Posterior vena cava (tissue), 2 donors: ENCODE measurements at regions of chr10 and their contacts with region 1.

Region 1: DNA sequence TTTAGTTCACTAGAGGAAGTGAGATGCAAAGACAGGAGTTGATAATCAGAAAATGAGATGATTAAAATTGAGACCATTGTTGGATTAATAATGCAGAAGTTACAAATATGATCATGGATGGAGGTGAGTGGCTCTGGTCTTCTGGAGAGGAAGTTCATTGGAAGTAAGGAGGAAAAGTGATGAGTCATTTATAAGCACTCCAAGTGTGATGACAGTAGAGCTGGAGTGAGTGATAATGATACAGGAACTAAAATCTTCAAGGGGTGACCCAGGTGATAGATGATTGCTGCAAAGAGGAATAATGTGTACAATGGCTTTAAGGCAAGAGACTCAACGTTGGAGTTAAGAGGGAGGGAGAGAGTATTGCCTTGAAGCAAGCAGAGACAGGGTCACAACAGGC is 20.7 kb downstream of the ZNF32 start:
- DNase-seq: no peak

Region 2: DNA sequence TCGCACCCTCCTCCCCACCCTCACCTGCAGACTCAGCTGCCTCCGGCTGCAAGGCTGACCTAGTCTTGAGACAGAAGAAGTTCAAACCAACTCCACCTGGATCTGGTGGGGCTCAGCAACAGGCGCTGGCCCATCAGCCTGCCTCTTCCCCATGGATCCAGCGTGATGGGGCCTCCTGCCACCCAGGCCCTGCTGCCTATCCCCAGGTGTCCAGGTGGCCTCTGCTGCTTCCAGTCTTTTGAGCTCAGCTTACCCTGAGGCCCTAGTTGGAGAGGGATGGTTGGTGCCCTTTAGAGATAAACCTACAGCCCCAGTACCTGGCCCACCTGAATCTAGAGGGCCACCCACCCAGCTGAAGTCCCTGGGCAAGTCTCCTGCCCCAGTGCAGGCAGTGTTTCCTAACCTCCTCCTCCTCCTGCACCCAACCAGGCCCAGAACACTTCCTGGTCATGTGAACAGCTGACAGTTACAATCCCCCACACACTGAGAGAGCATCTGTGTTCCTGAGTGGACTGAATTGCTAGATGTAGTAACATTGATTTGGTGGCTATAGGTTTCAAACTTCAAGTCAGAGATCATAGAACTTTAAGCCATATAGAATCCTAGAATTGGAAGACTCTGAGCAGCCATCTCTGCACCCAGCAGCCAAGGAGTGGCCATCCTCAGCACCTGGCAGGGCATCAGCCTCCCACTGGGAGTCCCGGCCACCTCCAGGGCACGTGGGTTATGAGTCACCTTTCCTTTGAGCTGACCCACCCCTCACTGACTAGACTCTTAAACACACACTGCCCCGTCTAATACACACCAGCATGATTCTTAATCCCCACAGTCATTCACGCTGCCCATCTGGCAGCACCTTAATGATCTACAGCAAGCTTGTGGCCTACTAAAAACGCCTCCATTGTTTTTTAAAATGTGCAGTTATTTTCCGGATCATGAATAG is 1798.0 kb after region 1 on chr10:
- intact Hi-C with region 1: loop called in 1 of 2 experiments (anchors 5 kb)
- DNase-seq: peak; percentile 75